ENCODE measurements at regions of chr7 and their contacts with region 1.

Region 1: GRCh38 chr7:21965291-21965690 is 19.6 kb upstream of the CDCA7L start:
- DNase-seq: no peak
- H3K4me3 Mint-ChIP-seq: no peak overlapping the region
- H3K27ac Mint-ChIP-seq: no peak overlapping the region
- H3K4me1 Mint-ChIP-seq: peaks cover 54% of the 10 kb centered on the region
- H3K27me3 Mint-ChIP-seq: no peaks in the 10 kb centered on the region
- CTCF ChIP-seq: no peak

Region 2: GRCh38 chr7:21934808-21935207 is 30.5 kb before region 1 on chr7:
- CTCF ChIA-PET with region 1: no interaction called
- intact Hi-C with region 1: no loop called
- DNase-seq: no peak
- H3K4me3 Mint-ChIP-seq: no peak overlapping the region
- H3K27ac Mint-ChIP-seq: no peak overlapping the region
- H3K4me1 Mint-ChIP-seq: peaks cover 14% of the 10 kb centered on the region
- H3K27me3 Mint-ChIP-seq: no peaks in the 10 kb centered on the region
- CTCF ChIP-seq: no peak

Region 3: GRCh38 chr7:21945454-21946227 is 19.6 kb before region 1 on chr7 and contains the start of gene CDCA7L:
- CTCF ChIA-PET with region 1: interaction called, 11 read pairs
- intact Hi-C with region 1: no loop called
- DNase-seq: peak; percentile 88
- H3K4me3 Mint-ChIP-seq: peak within 1 kb of the TSS; percentile 95
- H3K27ac Mint-ChIP-seq: peak within 1 kb of the TSS; percentile 97
- H3K4me1 Mint-ChIP-seq: peaks cover 33% of the 10 kb centered on the region
- H3K27me3 Mint-ChIP-seq: peaks cover 11% of the 10 kb centered on the region
- CTCF ChIP-seq: peak; percentile 31
- total RNA-seq, gene CDCA7L: 71.8 and 76.3 TPM in 2 replicates